ENCODE measurements at regions of chr4 and their contacts with region 1.

Region 1: GRCh38 chr4:121726642-121727268 is 30.0 kb upstream of the ANXA5 start:
- DNase-seq: no peak
- H3K4me3 ChIP-seq: no peak overlapping the region
- H3K27ac ChIP-seq: no peak overlapping the region
- H3K4me1 ChIP-seq: peaks cover 0 to under 1% (median 0%) of the 10 kb centered on the region in 4 donors
- H3K27me3 ChIP-seq: no peaks in the 10 kb centered on the region
- CTCF ChIP-seq: peak; percentile 61 to 69 (median 64)
- EP300 ChIP-seq: no peak
- POLR2A ChIP-seq: no peak

Region 2: DNA sequence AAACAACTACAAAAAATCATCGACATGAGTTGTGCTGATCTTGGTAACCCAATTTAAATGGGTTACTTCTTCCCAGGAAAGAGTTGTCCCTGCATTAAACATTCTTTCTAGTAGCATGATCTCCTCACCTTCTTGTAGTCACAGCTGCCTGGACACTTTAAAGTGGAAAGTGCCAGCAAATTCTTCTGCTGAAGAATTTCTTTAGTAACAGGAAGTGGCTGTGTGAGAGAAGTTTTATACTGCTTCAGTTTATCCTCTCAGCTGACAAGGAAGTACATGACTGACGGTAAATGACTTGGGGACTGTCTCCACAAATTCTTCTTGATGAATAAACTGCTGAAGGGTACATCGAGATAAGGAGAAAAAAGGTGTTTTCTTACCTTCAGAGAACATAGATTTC is 544.5 kb before region 1 on chr4:
- in situ Hi-C with region 1: no loop called
- intact Hi-C with region 1: no loop called
- DNase-seq: no peak
- H3K4me3 ChIP-seq: peak overlapping the region in 2 of 4 donors; percentile 15 to 35
- H3K27ac ChIP-seq: peak overlapping the region; percentile 60 to 82 (median 70)
- H3K4me1 ChIP-seq: peaks cover 0 to 26% (median 14%) of the 10 kb centered on the region in 4 donors
- H3K27me3 ChIP-seq: no peaks in the 10 kb centered on the region
- CTCF ChIP-seq: no peak
- EP300 ChIP-seq: no peak
- POLR2A ChIP-seq: no peak

Region 3: GRCh38 chr4:121390335-121390734 is 336.4 kb before region 1 on chr4:
- in situ Hi-C with region 1: no loop called
- intact Hi-C with region 1: no loop called
- DNase-seq: no peak
- H3K4me3 ChIP-seq: no peak overlapping the region
- H3K27ac ChIP-seq: no peak overlapping the region
- H3K4me1 ChIP-seq: no peaks in the 10 kb centered on the region
- H3K27me3 ChIP-seq: no peaks in the 10 kb centered on the region
- CTCF ChIP-seq: no peak
- EP300 ChIP-seq: no peak
- POLR2A ChIP-seq: no peak

Region 4: GRCh38 chr4:121462660-121463261 is 264.0 kb before region 1 on chr4:
- in situ Hi-C with region 1: loop called in 1 of 4 experiments (anchors 25 kb)
- intact Hi-C with region 1: no loop called
- DNase-seq: peak; percentile 20
- H3K4me3 ChIP-seq: no peak overlapping the region
- H3K27ac ChIP-seq: no peak overlapping the region
- H3K4me1 ChIP-seq: no peaks in the 10 kb centered on the region
- H3K27me3 ChIP-seq: no peaks in the 10 kb centered on the region
- CTCF ChIP-seq: peak; percentile 30 to 60 (median 49)
- EP300 ChIP-seq: no peak
- POLR2A ChIP-seq: no peak

Region 5: GRCh38 chr4:121484633-121485032 is 242.1 kb before region 1 on chr4:
- in situ Hi-C with region 1: loop called in 3 of 4 experiments (anchors 25 kb)
- intact Hi-C with region 1: no loop called
- DNase-seq: no peak
- H3K4me3 ChIP-seq: no peak overlapping the region
- H3K27ac ChIP-seq: no peak overlapping the region
- H3K4me1 ChIP-seq: no peaks in the 10 kb centered on the region
- H3K27me3 ChIP-seq: no peaks in the 10 kb centered on the region
- CTCF ChIP-seq: peak; percentile 34 to 62 (median 56)
- EP300 ChIP-seq: no peak
- POLR2A ChIP-seq: no peak